Activated CD8-positive, alpha-beta T cell treated with anti-CD3 and anti-CD28 coated beads, Interleukin-2, amount 10 ng/mL, durations not matched to agents 7 days and 5 days (primary cell): ENCODE measurements at regions of chr17 and their contacts with region 1.

Region 1: DNA sequence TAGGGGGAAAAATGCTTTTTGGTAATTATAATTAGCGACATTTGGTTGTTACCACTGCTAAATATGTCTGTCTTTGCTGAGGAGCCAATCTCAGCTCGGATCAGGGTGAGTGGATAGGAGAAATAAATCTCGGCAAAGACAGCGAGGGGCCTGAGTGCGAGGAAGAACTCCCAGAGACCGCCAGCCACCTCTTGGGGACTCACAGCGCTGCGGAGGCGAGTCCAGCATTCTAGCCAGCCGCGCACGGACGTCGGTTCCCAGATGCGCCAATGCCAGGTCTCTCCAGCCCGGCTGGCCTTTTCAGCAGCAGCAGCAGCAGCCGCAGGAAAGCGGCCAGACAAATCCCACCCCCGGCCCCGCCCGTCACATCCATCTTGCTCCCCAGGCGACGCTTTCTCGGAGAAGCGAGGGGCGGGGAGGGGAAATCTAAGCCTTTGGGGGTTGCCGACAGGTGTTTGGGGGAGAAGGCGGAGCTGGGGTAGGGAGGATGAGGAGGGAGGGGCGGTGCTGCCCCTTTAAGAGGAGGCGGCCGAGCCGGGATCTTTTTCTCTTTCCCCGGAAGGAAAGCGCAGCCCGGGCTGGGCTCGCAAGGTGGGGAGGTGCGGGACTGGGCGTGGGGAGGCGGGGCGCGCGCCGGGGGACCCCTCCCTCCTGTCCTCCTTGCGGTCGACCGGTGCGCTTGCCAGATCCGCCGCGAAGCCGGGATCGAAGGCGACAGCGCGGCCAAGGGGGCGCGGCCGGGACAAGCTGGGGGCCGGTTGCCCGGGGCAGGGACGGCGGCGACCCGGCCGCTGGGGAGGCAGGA is at the start of gene ITGA3:
- DNase-seq: peak; percentile 71
- ATAC-seq: peak; percentile 72
- H3K4me3 Mint-ChIP-seq: peak within 1 kb of the TSS; percentile 85
- H3K27ac Mint-ChIP-seq: peak within 1 kb of the TSS; percentile 79
- H3K4me1 Mint-ChIP-seq: peaks cover 41% of the 10 kb centered on the region
- H3K27me3 Mint-ChIP-seq: no peaks in the 10 kb centered on the region
- total RNA-seq, gene ITGA3: 7.9 to 8.7 TPM

Region 2: DNA sequence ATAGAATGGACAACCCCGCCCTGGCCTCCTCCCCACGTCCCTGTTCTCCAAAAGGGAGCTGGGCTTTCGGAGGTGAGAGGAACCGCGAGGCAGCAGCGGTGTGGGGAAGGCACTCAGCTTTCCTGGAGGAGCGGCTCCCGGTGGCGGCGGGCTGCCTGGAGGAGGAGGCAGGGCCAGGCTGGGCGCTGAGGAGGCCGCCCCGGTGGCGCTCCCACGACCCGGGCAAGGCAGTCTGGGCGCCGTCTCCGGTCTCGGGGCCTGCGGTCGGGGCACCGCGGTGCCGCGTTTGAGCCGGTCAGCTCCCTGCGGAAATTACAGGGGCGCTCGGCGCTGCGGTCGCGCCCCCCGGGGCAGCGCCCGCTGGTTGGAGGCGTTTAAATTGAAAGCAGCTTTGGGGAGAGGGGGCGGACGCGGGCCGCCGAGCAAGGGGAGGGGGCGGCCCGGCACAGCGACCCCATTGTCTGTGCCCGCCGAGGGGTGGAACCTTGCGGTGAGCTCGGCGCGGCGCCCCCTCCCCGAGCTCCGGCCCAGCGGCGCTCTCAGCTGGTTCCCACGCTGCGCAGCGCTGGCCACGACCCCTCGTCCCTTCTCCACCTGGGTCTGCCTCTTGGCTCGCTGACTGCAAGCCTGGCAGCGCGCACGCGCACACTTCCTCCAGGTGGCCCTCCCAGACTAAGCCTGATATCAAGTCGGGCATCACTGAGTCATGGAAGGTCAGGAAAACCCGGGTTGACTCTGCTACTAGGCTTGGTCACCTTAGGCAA is 145.4 kb before region 1 on chr17:
- CTCF ChIA-PET with region 1: no interaction called
- POLR2A ChIA-PET with region 1: no interaction called
- DNase-seq: no peak
- ATAC-seq: no peak
- H3K4me3 Mint-ChIP-seq: no peak overlapping the region
- H3K27ac Mint-ChIP-seq: no peak overlapping the region
- H3K4me1 Mint-ChIP-seq: peaks cover 4% of the 10 kb centered on the region
- H3K27me3 Mint-ChIP-seq: peaks cover 54% of the 10 kb centered on the region

Region 3: DNA sequence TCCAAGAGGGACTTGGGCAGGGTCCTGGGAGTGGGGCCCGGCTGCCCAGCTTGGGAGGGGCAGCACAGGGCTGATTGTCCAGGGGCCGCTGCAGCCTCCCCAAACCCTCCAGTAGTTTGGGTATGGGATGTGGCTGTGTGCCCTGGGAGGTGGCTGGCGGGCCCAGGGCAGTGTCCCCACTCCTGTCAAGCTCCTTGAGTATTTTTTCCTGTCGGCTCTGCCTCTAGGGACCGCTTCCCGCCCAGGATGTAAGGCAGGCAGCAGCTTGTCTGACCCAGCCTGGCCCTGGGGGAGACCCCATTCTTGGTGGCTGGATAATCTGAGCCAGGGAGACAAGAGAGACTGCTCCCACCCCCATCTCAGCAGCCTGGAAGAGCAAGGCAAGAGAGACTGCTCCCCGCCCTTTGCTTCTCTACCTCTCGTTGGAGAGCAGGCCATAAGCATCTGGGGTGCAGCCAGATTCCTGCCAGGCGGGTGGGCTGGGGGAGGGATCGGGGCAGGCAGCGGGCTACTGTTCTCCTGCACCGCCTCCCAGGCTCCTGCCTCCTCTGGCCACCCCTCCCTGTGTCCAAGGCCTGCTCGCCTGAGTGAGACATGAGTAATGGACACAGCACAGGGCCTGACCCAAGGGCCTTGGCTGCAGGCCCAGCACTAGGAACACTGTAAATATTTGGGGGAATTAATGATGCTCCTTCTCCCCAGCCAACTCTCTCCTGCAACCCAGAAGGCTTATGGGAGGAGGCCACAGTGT is 18.1 kb before region 1 on chr17:
- CTCF ChIA-PET with region 1: no interaction called
- POLR2A ChIA-PET with region 1: no interaction called
- DNase-seq: no peak
- ATAC-seq: no peak
- H3K4me3 Mint-ChIP-seq: no peak overlapping the region
- H3K27ac Mint-ChIP-seq: no peak overlapping the region
- H3K4me1 Mint-ChIP-seq: no peaks in the 10 kb centered on the region
- H3K27me3 Mint-ChIP-seq: peaks cover 30% of the 10 kb centered on the region

Region 4: GRCh38 chr17:50071692-50072486 is 16.3 kb after region 1 on chr17:
- CTCF ChIA-PET with region 1: interaction called, 14 read pairs
- POLR2A ChIA-PET with region 1: no interaction called
- DNase-seq: no peak
- ATAC-seq: peak; percentile 44
- H3K4me3 Mint-ChIP-seq: no peak overlapping the region
- H3K27ac Mint-ChIP-seq: no peak overlapping the region
- H3K4me1 Mint-ChIP-seq: peaks cover 4% of the 10 kb centered on the region
- H3K27me3 Mint-ChIP-seq: no peaks in the 10 kb centered on the region

Region 5: GRCh38 chr17:50079334-50080095 is 23.9 kb after region 1 on chr17:
- CTCF ChIA-PET with region 1: interaction called, 12 read pairs
- POLR2A ChIA-PET with region 1: no interaction called
- DNase-seq: no peak
- ATAC-seq: no peak
- H3K4me3 Mint-ChIP-seq: no peak overlapping the region
- H3K27ac Mint-ChIP-seq: no peak overlapping the region
- H3K4me1 Mint-ChIP-seq: no peaks in the 10 kb centered on the region
- H3K27me3 Mint-ChIP-seq: no peaks in the 10 kb centered on the region

Region 6: DNA sequence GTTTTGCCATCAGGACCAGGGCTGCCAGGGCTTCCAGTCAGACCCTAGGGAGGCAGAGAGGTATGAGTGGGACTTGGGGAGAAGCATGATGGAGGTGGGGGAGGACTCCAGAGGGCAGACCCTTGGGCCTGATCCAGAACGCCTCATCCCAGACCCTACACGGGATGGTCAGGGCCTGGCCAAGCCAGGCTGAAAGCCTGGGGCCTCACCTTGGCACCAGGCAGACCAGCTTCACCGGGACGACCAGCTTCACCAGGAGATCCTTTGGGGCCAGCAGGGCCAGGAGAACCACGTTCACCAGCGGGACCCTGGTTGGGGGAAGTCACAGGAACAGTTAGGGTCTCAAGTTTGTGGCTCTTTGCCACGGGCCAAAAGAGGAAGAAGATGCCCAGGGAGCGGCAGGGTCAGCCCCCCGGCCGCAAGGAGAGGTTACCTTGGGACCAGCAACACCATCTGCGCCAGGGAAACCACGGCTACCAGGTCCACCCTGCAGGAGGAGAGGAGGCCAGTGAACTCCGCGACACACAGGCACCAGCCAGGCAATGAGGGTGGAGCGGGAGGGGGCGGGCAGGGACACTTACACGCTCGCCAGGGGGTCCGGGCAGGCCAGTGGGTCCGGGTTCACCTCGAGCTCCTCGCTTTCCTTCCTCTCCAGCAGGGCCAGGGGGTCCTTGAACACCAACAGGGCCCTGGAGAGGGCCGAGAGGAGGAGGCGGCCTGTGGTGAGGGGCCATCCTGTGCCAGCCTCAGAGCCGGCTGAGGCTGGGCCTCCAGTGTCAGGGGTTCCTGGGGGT is 138.7 kb after region 1 on chr17:
- CTCF ChIA-PET with region 1: no interaction called
- POLR2A ChIA-PET with region 1: no interaction called
- DNase-seq: no peak
- ATAC-seq: no peak
- H3K4me3 Mint-ChIP-seq: no peak overlapping the region
- H3K27ac Mint-ChIP-seq: no peak overlapping the region
- H3K4me1 Mint-ChIP-seq: peaks cover 2% of the 10 kb centered on the region
- H3K27me3 Mint-ChIP-seq: peaks cover 14% of the 10 kb centered on the region